ENCODE measurements at regions of chr16 and their contacts with region 1.

Region 1: DNA sequence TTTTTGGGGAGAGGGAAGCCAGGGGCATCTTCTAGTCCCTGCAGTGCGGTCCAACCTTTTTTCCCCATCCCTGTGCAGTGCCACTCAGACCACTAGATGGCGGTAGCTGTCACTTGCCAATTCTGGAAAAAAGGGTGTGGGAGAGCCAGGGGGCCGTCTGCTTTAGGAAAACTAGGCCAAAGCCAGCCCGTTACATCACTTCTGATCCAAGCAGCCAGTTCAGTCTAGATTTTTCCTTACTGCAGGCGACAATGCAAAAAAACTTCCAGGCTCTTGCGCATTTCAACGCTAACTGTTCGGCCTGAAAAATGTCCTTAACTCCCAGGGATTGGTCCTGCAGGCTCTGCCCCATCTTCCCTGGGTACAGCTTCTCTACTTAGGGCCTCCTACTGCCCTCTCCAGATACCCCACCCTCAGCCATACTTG is 69.2 kb upstream of the CES5A start:
- DNase-seq: no peak
- H3K4me3 ChIP-seq: no peak overlapping the region
- H3K27me3 ChIP-seq: no peaks in the 10 kb centered on the region
- CTCF ChIP-seq: peak; percentile 97

Region 2: DNA sequence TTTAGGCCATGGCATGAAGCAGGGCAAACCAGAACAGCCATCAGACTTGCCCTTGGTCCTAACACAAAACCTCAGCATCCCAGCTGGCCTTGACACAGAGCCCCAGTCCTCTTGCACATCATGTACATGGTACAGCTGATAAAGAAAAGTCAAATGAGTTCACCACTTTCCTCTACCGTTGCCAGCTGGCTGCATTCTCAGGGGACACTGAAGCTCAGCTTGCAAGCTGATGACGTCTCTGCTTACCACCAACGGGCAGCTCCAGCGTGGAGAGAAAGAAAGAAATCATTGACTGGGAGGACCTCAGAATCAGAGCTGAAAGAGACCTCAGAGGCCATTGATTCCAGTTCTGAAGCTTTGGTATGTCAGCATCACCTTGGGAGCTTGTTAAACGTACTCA is 11.5 kb after region 1 on chr16:
- CTCF ChIA-PET with region 1: interaction called, 28 read pairs
- POLR2A ChIA-PET with region 1: no interaction called
- DNase-seq: no peak
- H3K4me3 ChIP-seq: no peak overlapping the region
- H3K27me3 ChIP-seq: no peaks in the 10 kb centered on the region; the same call in 1 of the 2 replicates
- CTCF ChIP-seq: no peak

Region 3: GRCh38 chr16:56145369-56145768 is 201.0 kb after region 1 on chr16:
- CTCF ChIA-PET with region 1: no interaction called
- POLR2A ChIA-PET with region 1: no interaction called
- DNase-seq: no peak
- H3K4me3 ChIP-seq: no peak overlapping the region
- H3K27me3 ChIP-seq: no peaks in the 10 kb centered on the region
- CTCF ChIP-seq: no peak